ENCODE measurements at regions of chr1 and their contacts with region 1.

Region 1: GRCh38 chr1:248404024-248404423 is 1.2 kb downstream of the OR2T1 start:
- DNase-seq: no peak
- H3K4me3 Mint-ChIP-seq: no peak overlapping the region
- H3K27ac Mint-ChIP-seq: no peak overlapping the region
- H3K4me1 Mint-ChIP-seq: no peaks in the 10 kb centered on the region
- H3K27me3 Mint-ChIP-seq: no peaks in the 10 kb centered on the region

Region 2: GRCh38 chr1:247681288-247681897 is 722.6 kb before region 1 on chr1:
- CTCF ChIA-PET with region 1: no interaction called
- intact Hi-C with region 1: loop called (anchors 5 kb)
- DNase-seq: peak; percentile 64
- H3K4me3 Mint-ChIP-seq: no peak overlapping the region
- H3K27ac Mint-ChIP-seq: no peak overlapping the region
- H3K4me1 Mint-ChIP-seq: no peaks in the 10 kb centered on the region
- H3K27me3 Mint-ChIP-seq: peaks cover 4% of the 10 kb centered on the region

Region 3: DNA sequence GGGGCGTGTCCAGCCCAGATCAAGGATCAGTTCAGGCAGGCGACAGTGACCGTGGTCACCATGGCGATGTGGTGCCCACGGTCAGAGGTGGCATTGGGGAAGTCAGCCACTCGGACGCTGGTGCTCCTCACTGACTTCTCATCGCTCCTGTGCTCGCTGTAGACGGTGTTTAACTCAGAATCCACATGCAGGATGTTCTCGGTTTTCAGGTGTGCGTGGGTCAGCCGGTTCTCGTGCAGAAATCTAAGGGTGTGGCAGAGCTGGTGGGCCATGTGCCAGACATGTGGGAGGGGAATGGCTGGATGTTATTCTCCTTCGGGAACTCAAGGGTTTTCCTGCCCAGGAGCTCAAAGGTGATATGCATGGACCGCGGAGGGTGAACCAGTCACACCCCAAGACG is 467.6 kb before region 1 on chr1:
- CTCF ChIA-PET with region 1: no interaction called
- intact Hi-C with region 1: loop called (anchors 5 kb)
- DNase-seq: no peak
- H3K4me3 Mint-ChIP-seq: no peak overlapping the region
- H3K27ac Mint-ChIP-seq: no peak overlapping the region
- H3K4me1 Mint-ChIP-seq: no peaks in the 10 kb centered on the region
- H3K27me3 Mint-ChIP-seq: peaks cover 4% of the 10 kb centered on the region

Region 4: GRCh38 chr1:248243204-248243603 is 160.8 kb before region 1 on chr1:
- CTCF ChIA-PET with region 1: no interaction called
- intact Hi-C with region 1: loop called (anchors 5 kb)
- DNase-seq: peak; percentile 35
- H3K4me3 Mint-ChIP-seq: no peak overlapping the region
- H3K27ac Mint-ChIP-seq: no peak overlapping the region
- H3K4me1 Mint-ChIP-seq: peaks cover 2% of the 10 kb centered on the region
- H3K27me3 Mint-ChIP-seq: peaks cover 12% of the 10 kb centered on the region

Region 5: DNA sequence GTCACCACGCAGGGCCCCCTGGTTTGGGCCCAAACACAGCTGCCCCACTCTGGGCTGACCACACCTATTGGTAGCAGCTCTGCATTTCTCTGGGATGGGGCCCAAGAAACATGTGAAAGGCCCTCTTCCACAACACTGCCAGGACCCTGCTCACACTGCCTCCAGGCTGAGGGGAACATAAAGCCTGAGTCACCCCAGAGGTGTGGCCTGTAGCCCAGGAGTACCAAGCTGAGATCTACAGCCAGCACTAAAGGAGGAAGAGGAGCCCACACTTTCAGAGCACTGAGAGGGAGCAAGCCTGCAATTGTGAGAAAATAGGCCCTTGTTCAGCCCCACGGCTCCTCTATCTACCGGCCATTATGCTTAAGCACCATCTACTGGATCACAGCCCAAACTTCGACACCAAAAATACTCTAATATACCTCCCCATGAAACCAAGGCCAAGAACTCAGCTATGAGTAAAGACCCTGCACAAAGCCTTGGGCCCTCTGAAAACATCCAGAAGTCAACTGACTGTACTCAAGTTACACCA is 207.9 kb after region 1 on chr1:
- CTCF ChIA-PET with region 1: interaction called, 6 read pairs
- intact Hi-C with region 1: loop called (anchors 1 kb)
- DNase-seq: peak; percentile 53
- H3K4me3 Mint-ChIP-seq: no peak overlapping the region
- H3K27ac Mint-ChIP-seq: no peak overlapping the region
- H3K4me1 Mint-ChIP-seq: peaks cover 29% of the 10 kb centered on the region
- H3K27me3 Mint-ChIP-seq: no peaks in the 10 kb centered on the region

Region 6: DNA sequence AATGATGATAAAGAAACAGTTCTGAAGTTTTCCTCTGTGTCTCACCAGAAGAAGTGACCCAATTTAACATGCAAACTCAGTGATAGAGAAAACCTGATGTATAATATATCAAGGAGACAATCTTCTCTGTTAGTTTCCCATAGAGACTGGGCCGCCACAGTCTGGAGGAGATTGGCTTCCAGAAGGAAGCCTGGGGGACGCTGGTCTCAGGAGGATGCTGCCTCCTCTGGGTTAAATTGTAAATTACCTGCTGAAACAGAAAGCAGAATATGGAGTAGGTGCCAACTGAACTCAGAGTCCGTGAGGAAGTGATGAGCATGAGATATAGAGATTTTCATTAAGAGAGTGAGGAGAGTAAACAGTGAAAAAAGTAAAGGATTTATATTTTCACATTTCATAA is 282.8 kb after region 1 on chr1:
- CTCF ChIA-PET with region 1: interaction called, 5 read pairs
- intact Hi-C with region 1: loop called (anchors 1 kb)
- DNase-seq: peak; percentile 44
- H3K4me3 Mint-ChIP-seq: no peak overlapping the region
- H3K27ac Mint-ChIP-seq: no peak overlapping the region
- H3K4me1 Mint-ChIP-seq: peaks cover 6% of the 10 kb centered on the region
- H3K27me3 Mint-ChIP-seq: peaks cover 8% of the 10 kb centered on the region